IMR-90 (cell line): ENCODE measurements at regions of chr15 and their contacts with region 1.

Region 1: DNA sequence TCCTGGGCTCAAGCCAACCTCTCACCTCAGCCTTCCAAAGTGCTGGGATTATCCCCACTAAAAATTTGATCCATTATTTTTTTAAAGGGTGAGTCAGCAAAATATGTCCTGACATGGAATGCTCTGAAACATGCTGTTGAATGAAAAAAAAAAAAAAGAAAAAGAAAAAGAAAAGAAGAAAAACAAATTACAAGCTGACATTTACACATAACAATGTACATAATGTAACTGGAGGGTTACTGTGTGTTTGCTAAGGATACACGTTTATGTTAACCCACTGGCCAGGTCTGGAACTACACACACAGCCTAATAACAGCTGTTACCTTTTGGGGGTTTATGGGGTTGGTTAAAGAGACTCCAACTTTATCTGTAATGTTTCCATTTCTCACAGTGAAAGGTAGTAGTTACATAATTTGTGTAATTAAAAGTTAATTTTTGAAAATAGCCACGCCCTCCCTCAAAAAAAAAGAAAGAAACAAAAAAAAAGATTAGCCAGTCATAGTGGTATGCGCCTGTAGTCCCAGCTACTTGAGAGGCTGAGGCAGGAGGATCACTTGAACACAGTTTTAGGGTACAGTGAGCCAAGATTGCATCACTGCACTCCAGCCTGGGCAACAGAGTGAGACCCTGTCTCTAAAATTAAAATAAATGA is 3.1 kb upstream of the MESP2 start:
- DNase-seq: peak; percentile 65
- ATAC-seq: no peak; the same call in 1 of the 2 replicates
- H3K4me3 ChIP-seq: no peak overlapping the region
- H3K27ac ChIP-seq: peak overlapping the region; percentile 41; the same call in 1 of the 2 replicates
- H3K4me1 ChIP-seq: peaks cover 15% of the 10 kb centered on the region
- H3K27me3 ChIP-seq: no peaks in the 10 kb centered on the region
- CTCF ChIP-seq: no peak; the same call in 1 of the 2 replicates
- POLR2A ChIP-seq: no peak
- RAD21 ChIP-seq: no peak

Region 2: GRCh38 chr15:88083811-88084760 is 1689.0 kb before region 1 on chr15:
- CTCF ChIA-PET with region 1: no interaction called
- POLR2A ChIA-PET with region 1: no interaction called
- dilution Hi-C with region 1: no loop called
- in situ Hi-C with region 1: no loop called
- intact Hi-C with region 1: no loop called
- DNase-seq: no peak
- ATAC-seq: no peak
- H3K4me3 ChIP-seq: no peak overlapping the region
- H3K27ac ChIP-seq: no peak overlapping the region
- H3K4me1 ChIP-seq: no peaks in the 10 kb centered on the region
- H3K27me3 ChIP-seq: no peaks in the 10 kb centered on the region
- CTCF ChIP-seq: no peak
- POLR2A ChIP-seq: no peak
- RAD21 ChIP-seq: no peak

Region 3: DNA sequence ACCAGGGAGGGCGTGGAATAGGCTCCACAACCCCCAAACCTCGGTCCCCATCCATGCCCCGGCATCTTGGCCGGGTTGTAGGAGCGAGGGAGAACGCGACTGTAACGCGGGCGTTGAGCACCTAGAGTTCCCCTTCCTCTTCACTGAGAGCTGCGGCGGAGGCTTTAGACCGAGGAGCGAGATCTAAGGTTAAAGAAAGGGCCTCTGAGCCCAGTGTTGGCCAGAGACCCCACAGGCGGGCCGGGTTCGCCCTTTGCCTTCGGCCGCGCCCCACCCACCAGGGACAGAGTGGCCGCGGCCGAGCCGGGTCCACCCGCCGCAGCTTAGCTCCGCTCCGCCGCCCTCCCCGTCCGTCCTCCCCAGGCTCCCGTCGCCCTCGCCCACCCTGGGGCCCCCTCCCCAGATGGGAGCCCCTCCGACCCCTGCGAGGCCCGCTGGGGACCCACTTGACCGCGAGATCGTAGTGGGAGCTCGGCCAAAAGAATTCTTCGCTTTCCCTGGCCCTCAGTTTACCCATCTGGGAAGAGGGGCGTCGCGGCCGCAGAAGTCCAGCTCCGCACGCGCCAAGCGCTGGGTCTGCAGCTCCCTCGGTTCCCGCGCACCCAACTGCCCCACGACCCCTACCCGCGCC is 41.2 kb after region 1 on chr15:
- CTCF ChIA-PET with region 1: no interaction called
- POLR2A ChIA-PET with region 1: no interaction called
- dilution Hi-C with region 1: no loop called
- in situ Hi-C with region 1: no loop called
- intact Hi-C with region 1: loop called (anchors 1 kb)
- DNase-seq: no peak
- ATAC-seq: peak; percentile 19
- H3K4me3 ChIP-seq: peak overlapping the region; percentile 58
- H3K27ac ChIP-seq: 0 out of 2 replicates have a peak overlapping the region, but pooled peaks have one; percentile 6
- H3K4me1 ChIP-seq: peaks cover 17% of the 10 kb centered on the region
- H3K27me3 ChIP-seq: no peaks in the 10 kb centered on the region
- CTCF ChIP-seq: no peak
- POLR2A ChIP-seq: no peak
- RAD21 ChIP-seq: no peak

Region 4: GRCh38 chr15:89845305-89845893 is 72.3 kb after region 1 on chr15:
- CTCF ChIA-PET with region 1: no interaction called
- POLR2A ChIA-PET with region 1: no interaction called
- dilution Hi-C with region 1: loop called (anchors 25 kb)
- in situ Hi-C with region 1: no loop called
- intact Hi-C with region 1: loop called (anchors 5 kb)
- DNase-seq: peak; percentile 92
- ATAC-seq: peak; percentile 90
- H3K4me3 ChIP-seq: no peak overlapping the region
- H3K27ac ChIP-seq: peak overlapping the region; percentile 94
- H3K4me1 ChIP-seq: peaks cover 14% of the 10 kb centered on the region
- H3K27me3 ChIP-seq: no peaks in the 10 kb centered on the region
- CTCF ChIP-seq: no peak
- POLR2A ChIP-seq: no peak
- RAD21 ChIP-seq: no peak

Region 5: GRCh38 chr15:89978914-89979313 is 205.9 kb after region 1 on chr15:
- CTCF ChIA-PET with region 1: no interaction called
- POLR2A ChIA-PET with region 1: interaction called, 10 read pairs
- dilution Hi-C with region 1: no loop called
- in situ Hi-C with region 1: no loop called
- intact Hi-C with region 1: no loop called
- DNase-seq: no peak
- ATAC-seq: no peak
- H3K4me3 ChIP-seq: no peak overlapping the region
- H3K27ac ChIP-seq: no peak overlapping the region
- H3K4me1 ChIP-seq: no peaks in the 10 kb centered on the region
- H3K27me3 ChIP-seq: peaks cover 44% of the 10 kb centered on the region
- CTCF ChIP-seq: no peak
- POLR2A ChIP-seq: no peak
- RAD21 ChIP-seq: no peak

Region 6: DNA sequence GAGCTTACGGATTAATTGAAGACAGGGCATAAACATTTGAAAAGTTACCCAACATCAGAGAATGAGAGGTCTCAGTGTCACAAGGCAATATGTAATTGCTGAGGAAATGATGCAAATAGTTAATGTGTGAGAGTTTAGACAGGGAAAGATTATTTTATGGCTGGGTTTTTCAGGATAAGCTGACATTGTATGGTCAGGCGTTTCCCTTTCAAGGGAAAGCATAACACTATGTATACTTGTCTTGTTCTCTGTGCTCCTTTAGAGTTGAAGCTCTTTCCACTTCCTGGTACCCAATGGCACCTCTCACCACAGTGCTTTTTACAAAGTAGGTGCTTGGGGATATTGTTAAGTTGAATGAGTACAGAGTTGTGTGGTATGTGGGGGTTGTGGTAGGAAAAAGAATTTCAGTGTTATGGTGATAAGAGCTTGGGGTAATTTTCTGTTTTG is 634.8 kb after region 1 on chr15:
- CTCF ChIA-PET with region 1: no interaction called
- POLR2A ChIA-PET with region 1: no interaction called
- dilution Hi-C with region 1: no loop called
- in situ Hi-C with region 1: no loop called
- intact Hi-C with region 1: no loop called
- DNase-seq: peak; percentile 61
- ATAC-seq: peak; percentile 40
- H3K4me3 ChIP-seq: no peak overlapping the region
- H3K27ac ChIP-seq: peak overlapping the region; percentile 59; the same call in 1 of the 2 replicates
- H3K4me1 ChIP-seq: peaks cover 15% of the 10 kb centered on the region
- H3K27me3 ChIP-seq: no peaks in the 10 kb centered on the region
- CTCF ChIP-seq: no peak
- POLR2A ChIP-seq: no peak
- RAD21 ChIP-seq: no peak